PC-3 (cell line): ENCODE measurements at regions of chr9 and their contacts with region 1.

Region 1: DNA sequence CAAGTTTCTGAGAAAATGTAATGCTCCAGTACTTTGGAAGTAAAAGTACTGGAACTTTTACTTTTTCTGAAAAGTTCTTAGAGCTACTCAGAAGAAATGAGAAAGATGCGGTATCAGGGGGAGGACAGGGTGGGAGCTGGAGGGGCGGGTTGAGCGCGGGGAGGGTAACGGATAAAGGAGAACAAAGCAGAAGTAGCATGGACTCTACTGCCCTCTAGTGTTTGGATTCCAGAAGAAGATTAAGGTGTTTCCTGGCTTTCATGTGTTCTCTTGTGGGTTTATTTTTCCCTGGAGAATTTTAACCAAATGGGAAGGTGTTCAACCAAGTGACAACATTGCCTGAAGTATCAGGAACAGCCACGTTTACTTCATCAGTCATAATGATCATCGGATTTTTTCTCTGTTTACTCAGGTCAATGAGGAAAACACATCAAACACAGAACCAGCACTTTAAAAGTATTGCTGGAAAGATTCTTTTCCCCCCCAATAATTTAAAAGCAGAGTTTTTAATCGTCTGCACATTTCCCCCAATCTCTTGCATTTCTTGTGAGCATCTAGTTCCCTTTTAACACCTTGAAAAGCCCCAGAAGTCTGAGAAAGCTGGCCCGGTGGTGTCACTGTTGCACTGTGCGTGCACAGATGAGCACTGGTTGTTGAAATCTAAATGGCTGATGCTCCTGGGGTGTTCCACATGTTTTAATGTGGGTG is 190.6 kb downstream of the MPDZ start:
- DNase-seq: peak; percentile 70
- ATAC-seq: peak; percentile 90
- H3K4me3 ChIP-seq: peak overlapping the region; percentile 51
- H3K27ac ChIP-seq: no peak overlapping the region
- H3K4me1 ChIP-seq: peaks cover 9% of the 10 kb centered on the region
- H3K27me3 ChIP-seq: no peaks in the 10 kb centered on the region
- CTCF ChIP-seq: peak; percentile 66

Region 2: DNA sequence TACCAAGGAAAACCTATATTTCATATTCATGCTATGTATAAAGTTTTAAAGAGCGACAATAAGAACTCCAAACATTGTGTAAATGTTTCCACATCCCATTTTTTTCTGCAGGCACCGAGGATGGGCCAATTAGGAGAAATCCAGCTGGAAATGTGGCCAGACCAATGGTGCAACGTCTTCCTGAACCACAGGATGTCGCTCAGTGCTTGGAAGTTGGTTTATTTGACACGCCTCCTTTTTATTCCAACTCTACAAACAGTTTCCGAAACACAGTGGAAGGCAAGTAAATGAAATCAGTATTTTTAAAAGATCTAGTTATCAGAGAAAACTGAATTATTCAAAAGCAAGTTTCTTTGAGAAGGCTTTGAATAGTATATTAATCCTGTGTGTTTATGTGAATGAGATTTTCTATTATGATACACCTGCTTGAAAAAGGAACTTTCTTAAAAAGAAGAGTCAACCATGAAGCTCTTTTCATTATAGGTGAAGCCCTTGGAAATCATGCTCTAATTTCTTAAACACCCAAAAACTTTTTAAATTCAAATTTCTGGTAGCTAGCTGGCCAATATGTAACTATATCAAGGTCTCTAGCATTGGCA is 386.6 kb before region 1 on chr9:
- CTCF ChIA-PET with region 1: no interaction called
- POLR2A ChIA-PET with region 1: no interaction called
- intact Hi-C with region 1: loop called (anchors 5 kb)
- DNase-seq: peak; percentile 70
- ATAC-seq: peak; percentile 54
- H3K4me3 ChIP-seq: peak overlapping the region; percentile 52; the same call in 1 of the 2 replicates
- H3K27ac ChIP-seq: no peak overlapping the region
- H3K4me1 ChIP-seq: peaks cover 17% of the 10 kb centered on the region
- H3K27me3 ChIP-seq: no peaks in the 10 kb centered on the region
- CTCF ChIP-seq: peak; percentile 81

Region 3: GRCh38 chr9:12813960-12814876 is 274.7 kb before region 1 on chr9:
- CTCF ChIA-PET with region 1: interaction called, 17 read pairs
- POLR2A ChIA-PET with region 1: no interaction called
- intact Hi-C with region 1: no loop called
- DNase-seq: peak; percentile 93
- ATAC-seq: peak; percentile 62
- H3K4me3 ChIP-seq: peak overlapping the region; percentile 35
- H3K27ac ChIP-seq: peak overlapping the region; percentile 100
- H3K4me1 ChIP-seq: peaks cover 65% of the 10 kb centered on the region
- H3K27me3 ChIP-seq: no peaks in the 10 kb centered on the region
- CTCF ChIP-seq: no peak

Region 4: GRCh38 chr9:13033959-13034693 is 54.7 kb before region 1 on chr9:
- CTCF ChIA-PET with region 1: interaction called, 5 read pairs
- POLR2A ChIA-PET with region 1: no interaction called
- intact Hi-C with region 1: loop called (anchors 1 kb)
- DNase-seq: peak; percentile 84
- ATAC-seq: peak; percentile 81
- H3K4me3 ChIP-seq: peak overlapping the region; percentile 65
- H3K27ac ChIP-seq: peak overlapping the region; percentile 31; the same call in 1 of the 2 replicates
- H3K4me1 ChIP-seq: peaks cover 26% of the 10 kb centered on the region
- H3K27me3 ChIP-seq: no peaks in the 10 kb centered on the region
- CTCF ChIP-seq: peak; percentile 79

Region 5: GRCh38 chr9:13189362-13189761 is 100.5 kb after region 1 on chr9:
- CTCF ChIA-PET with region 1: no interaction called
- POLR2A ChIA-PET with region 1: no interaction called
- intact Hi-C with region 1: no loop called
- DNase-seq: no peak
- ATAC-seq: no peak; the same call in 1 of the 2 replicates
- H3K4me3 ChIP-seq: no peak overlapping the region
- H3K27ac ChIP-seq: no peak overlapping the region
- H3K4me1 ChIP-seq: peaks cover 5% of the 10 kb centered on the region; the same call in 1 of the 2 replicates
- H3K27me3 ChIP-seq: no peaks in the 10 kb centered on the region
- CTCF ChIP-seq: no peak

Region 6: DNA sequence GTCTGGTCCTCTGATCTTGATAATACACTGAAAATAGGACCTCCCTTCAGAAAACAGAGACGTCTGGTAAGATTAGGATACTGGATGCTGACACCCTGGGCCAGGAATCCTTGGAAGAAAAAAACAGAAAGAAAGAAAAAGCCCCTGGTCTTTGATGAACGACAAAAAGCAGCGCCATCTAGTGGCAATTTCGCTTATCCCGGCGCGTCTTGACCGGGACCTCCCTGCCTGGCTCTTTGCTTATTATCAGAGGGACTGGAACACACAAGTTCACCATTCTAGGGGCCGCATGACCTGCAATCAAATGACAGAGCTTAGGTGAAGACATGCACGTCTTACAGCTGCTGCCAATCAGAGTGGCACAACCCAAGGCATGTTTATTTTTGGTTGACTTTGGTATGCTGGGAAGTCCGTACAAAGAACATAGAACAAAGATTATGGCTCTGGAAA is 1339.9 kb after region 1 on chr9:
- CTCF ChIA-PET with region 1: interaction called, 7 read pairs
- POLR2A ChIA-PET with region 1: no interaction called
- intact Hi-C with region 1: loop called (anchors 10 kb)
- DNase-seq: peak; percentile 73
- ATAC-seq: peak; percentile 63
- H3K4me3 ChIP-seq: no peak overlapping the region
- H3K27ac ChIP-seq: no peak overlapping the region
- H3K4me1 ChIP-seq: peaks cover 19% of the 10 kb centered on the region
- H3K27me3 ChIP-seq: no peaks in the 10 kb centered on the region
- CTCF ChIP-seq: peak; percentile 77